ENCODE measurements at regions of chr5 and their contacts with region 1.

Region 1: DNA sequence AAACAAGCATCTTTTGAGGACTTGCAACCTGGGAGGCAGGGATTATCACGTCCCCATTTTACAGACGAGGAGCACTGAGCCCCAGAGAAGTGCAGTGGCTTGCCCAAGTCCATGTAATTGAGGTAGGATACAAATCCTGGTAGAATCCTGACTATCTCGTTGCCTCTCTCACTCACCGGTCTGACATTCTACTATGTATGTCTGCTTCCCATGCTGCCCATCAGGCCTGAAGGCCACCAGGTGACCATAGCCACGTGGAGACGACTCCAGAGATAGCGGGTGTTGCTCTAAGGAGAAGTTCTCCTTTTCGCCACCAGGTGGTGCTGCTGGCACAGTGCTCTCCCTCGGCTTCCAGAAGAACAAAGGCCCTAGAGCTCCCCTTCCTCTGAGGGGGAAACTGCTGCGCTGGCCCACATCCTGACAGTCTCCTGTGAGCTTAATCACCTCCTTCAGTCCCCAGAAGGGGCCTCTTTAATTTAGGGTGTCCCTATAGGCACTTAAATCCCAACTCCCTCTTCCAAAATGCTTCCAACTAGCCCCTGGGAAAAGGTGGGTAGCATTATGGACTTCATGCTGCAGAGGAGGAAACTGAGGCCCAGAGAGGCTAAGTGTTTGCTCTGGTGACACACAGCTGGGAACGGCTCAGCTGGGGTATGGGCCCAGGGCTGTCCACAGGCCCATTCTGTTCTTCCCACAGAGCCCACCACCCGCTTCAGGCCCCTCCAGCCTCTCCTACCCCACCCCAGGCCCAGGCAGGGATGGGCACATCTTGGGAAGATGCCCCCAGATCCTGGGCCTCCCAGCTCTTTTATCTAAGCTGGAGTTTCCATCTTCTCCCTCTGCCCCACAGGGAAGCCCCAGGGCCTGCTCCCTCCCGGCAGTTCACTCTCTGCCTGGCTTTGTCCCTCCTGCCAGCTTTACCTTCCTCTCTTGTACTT is 6.4 kb downstream of the SLC34A1 start:
- DNase-seq: peak; percentile 76 to 91 (median 88)
- ATAC-seq: peak; percentile 89
- H3K4me3 ChIP-seq: no peak overlapping the region
- H3K4me3 Mint-ChIP-seq: peak overlapping the region in 9 of 10 donors; percentile 29 to 68 (median 53)
- H3K27ac ChIP-seq: peak overlapping the region; percentile 63
- H3K27ac Mint-ChIP-seq: peak overlapping the region in 8 of 9 donors; percentile 65 to 86 (median 78)
- H3K4me1 ChIP-seq: peaks cover 31 to 33% of the 10 kb centered on the region in 2 donors
- H3K4me1 Mint-ChIP-seq: peaks cover 30 to 39% (median 34%) of the 10 kb centered on the region in 7 donors
- H3K27me3 ChIP-seq: no peaks in the 10 kb centered on the region
- H3K27me3 Mint-ChIP-seq: peaks cover 0 to 6% (median 0%) of the 10 kb centered on the region in 5 donors

Region 2: DNA sequence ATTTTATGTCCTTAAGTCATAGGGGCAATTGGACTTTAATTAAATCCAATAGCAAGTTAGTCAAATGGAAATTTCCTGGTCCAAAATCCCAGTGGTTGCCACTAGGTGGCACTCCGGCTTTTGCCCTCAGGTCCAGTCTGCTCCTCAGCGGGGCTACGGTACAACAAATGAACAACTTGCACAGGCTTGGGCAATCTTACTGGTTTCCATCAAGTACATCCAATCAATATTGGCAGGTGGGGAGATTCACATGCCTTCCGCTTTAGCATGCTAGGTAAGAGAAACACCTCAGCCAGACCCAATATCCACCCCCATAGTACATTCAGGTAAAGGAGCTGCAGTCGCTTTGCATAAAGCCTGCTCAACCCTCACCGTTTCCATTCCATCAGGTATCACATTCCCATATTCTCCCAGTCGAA is 72.7 kb before region 1 on chr5:
- CTCF ChIA-PET with region 1: interaction called, 7 read pairs
- POLR2A ChIA-PET with region 1: no interaction called
- intact Hi-C with region 1: loop called in 1 of 2 experiments (anchors 2 kb)
- DNase-seq: peak; percentile 41 to 73 (median 69)
- ATAC-seq: peak; percentile 84
- H3K4me3 ChIP-seq: no peak overlapping the region
- H3K4me3 Mint-ChIP-seq: no peak overlapping the region
- H3K27ac ChIP-seq: no peak overlapping the region
- H3K27ac Mint-ChIP-seq: peak overlapping the region in 2 of 9 donors; percentile 32 to 37
- H3K4me1 ChIP-seq: peaks cover 1% of the 10 kb centered on the region in 2 donors
- H3K4me1 Mint-ChIP-seq: peaks cover 0 to 49% (median 20%) of the 10 kb centered on the region in 7 donors
- H3K27me3 ChIP-seq: no peaks in the 10 kb centered on the region
- H3K27me3 Mint-ChIP-seq: no peaks in the 10 kb centered on the region

Region 3: GRCh38 chr5:177370488-177371119 is 20.0 kb before region 1 on chr5:
- CTCF ChIA-PET with region 1: interaction called, 58 read pairs
- POLR2A ChIA-PET with region 1: interaction called, 52 read pairs
- intact Hi-C with region 1: loop called (anchors 1 to 2 kb)
- DNase-seq: peak in 7 of 9 donors; percentile 36 to 74 (median 65)
- ATAC-seq: peak; percentile 90
- H3K4me3 ChIP-seq: no peak overlapping the region
- H3K4me3 Mint-ChIP-seq: peak overlapping the region in 7 of 10 donors; percentile 20 to 79 (median 64)
- H3K27ac ChIP-seq: peak overlapping the region; percentile 76
- H3K27ac Mint-ChIP-seq: peak overlapping the region in 7 of 9 donors; percentile 33 to 94 (median 86)
- H3K4me1 ChIP-seq: peaks cover 36 to 73% of the 10 kb centered on the region in 2 donors
- H3K4me1 Mint-ChIP-seq: peaks cover 51 to 80% (median 70%) of the 10 kb centered on the region in 7 donors
- H3K27me3 ChIP-seq: no peaks in the 10 kb centered on the region
- H3K27me3 Mint-ChIP-seq: no peaks in the 10 kb centered on the region

Region 4: DNA sequence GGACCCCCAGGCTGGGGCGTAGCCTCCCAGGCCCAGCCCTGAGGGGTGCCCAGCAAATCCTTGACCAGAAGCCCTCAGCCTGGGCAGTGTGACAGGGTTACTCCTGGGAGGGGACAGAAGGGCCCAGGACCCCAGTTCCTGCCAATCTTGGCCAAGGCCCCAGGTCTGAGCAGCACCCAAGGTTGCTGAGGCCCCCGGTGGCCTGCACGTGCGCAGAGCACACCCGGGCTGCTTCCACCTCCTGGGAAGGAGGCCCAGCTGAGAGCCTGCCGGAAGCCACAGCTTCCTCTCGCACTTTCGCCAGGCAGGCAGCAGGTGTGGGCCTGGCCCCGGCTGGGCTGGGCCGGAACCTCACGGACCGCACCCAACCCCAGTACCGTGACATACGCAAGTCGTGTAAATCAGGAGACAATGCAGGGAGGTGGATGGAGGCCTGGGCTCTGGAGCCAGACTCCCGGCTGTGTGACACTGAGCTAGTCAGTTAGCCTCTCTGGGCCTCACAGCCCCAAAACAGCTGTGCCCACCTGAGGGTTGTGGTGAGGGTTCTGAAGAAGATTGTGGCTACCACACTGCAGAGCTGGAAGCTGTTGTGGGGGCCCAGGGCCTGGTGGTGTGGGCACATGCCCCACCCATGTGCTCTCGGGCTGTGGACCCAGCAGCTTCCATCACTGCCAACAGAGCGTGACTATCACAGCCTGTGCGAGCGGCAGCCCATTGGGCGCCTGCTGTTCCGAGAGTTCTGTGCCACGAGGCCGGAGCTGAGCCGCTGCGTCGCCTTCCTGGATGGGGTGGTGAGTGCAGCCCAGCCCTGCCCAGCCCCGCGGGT is 40.9 kb after region 1 on chr5:
- CTCF ChIA-PET with region 1: interaction called, 5 read pairs
- POLR2A ChIA-PET with region 1: interaction called, 19 read pairs
- intact Hi-C with region 1: loop called (anchors 1 kb)
- DNase-seq: peak; percentile 46 to 77 (median 73)
- ATAC-seq: peak; percentile 36
- H3K4me3 ChIP-seq: peak overlapping the region; percentile 95
- H3K4me3 Mint-ChIP-seq: peak overlapping the region; percentile 87 to 96 (median 94)
- H3K27ac ChIP-seq: peak overlapping the region; percentile 92
- H3K27ac Mint-ChIP-seq: peak overlapping the region; percentile 91 to 97 (median 94)
- H3K4me1 ChIP-seq: peaks cover 67 to 70% of the 10 kb centered on the region in 2 donors
- H3K4me1 Mint-ChIP-seq: peaks cover 37 to 87% (median 66%) of the 10 kb centered on the region in 7 donors
- H3K27me3 ChIP-seq: no peaks in the 10 kb centered on the region
- H3K27me3 Mint-ChIP-seq: no peaks in the 10 kb centered on the region

Region 5: DNA sequence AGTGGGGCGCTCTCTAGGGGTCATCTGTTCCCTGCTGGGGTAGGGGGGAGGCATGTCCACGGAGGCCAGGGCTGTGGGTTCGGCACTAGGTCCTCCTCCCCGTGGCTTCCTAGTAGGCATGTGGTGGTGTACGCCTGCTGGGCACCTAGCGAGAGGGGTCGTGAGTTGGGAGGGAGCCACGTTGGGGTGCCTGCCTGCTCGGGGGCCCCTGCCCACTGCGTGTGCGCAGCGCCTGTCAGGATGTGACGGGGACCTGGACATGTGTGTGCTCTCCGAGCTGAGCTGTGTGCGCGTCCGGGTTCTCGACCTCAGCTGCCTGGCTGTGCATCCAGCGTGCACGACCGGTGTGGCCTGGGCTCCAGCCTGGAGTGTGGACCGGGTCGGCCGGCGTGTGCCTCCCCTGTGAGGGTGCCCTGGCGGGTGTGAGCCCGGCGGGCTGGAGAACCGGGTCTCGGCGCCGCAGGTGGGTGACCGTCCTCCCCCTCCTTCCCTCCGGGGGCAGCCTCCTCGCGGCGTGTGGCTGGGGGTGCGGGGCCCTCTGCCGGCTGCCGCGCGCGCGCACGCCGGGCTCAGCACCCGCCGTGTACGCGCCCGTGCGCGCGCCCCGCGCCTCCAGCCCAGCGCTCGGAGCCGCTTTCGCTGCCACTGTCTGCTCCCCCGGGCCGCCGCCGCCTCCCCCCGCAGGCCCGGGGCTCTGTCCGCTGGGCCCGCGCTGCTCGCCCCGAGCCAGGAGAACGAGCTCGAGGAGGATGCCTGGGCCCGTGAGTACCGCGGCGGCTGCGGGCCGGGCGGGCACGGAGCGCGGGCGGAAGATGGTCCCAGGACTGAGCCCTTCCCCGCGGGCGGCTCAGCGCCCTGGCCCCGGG is 55.8 kb after region 1 on chr5 and contains the start of gene PRR7:
- CTCF ChIA-PET with region 1: interaction called, 20 read pairs
- POLR2A ChIA-PET with region 1: interaction called, 7 read pairs
- intact Hi-C with region 1: no loop called
- DNase-seq: peak; percentile 71 to 85 (median 81)
- ATAC-seq: peak; percentile 75
- H3K4me3 ChIP-seq: peak within 1 kb of the TSS; percentile 64
- H3K4me3 Mint-ChIP-seq: peak within 1 kb of the TSS; percentile 77 to 85 (median 82)
- H3K27ac ChIP-seq: peak within 1 kb of the TSS; percentile 97
- H3K27ac Mint-ChIP-seq: peak within 1 kb of the TSS; percentile 86 to 97 (median 92)
- H3K4me1 ChIP-seq: peaks cover 7 to 34% of the 10 kb centered on the region in 2 donors
- H3K4me1 Mint-ChIP-seq: peaks cover 31 to 52% (median 41%) of the 10 kb centered on the region in 7 donors
- H3K27me3 ChIP-seq: no peaks in the 10 kb centered on the region
- H3K27me3 Mint-ChIP-seq: peaks cover 0 to 10% (median 0%) of the 10 kb centered on the region in 5 donors
- total RNA-seq, gene PRR7: 6.4 to 31.8 (median 6.8) TPM

Region 6: DNA sequence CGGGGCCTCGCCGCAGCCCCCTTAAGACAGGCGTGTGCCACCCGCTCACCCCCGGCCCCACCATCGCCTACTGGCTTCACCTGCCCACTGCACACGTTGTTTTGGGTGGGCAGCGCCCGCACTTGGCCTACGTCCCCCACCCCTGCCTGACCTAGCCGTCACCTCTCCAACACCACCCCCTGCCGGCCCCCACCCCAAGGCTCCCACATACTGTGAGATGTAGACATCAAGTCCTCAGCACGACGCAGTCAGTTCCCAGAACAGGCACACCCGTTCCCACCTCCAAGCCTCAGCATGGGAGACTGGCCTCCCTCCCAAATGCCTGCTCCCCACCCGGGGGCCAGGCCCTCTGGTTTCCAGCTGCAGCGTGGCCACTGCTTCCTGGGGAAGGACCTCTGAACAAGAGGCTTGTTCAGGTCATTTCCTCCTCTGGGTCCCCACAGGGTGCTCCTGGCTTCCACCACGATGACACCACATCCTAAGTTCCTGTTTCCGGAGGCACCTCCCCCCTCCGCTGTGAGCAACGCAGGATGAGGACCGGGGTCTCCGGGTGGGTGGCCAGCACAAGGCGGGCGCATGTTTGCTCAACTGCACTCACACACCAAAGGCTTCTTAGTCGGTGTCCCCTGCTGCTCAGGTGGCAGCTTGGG is 71.5 kb after region 1 on chr5:
- CTCF ChIA-PET with region 1: interaction called, 149 read pairs
- POLR2A ChIA-PET with region 1: interaction called, 8 read pairs
- intact Hi-C with region 1: no loop called
- DNase-seq: no peak
- ATAC-seq: peak; percentile 40
- H3K4me3 ChIP-seq: no peak overlapping the region
- H3K4me3 Mint-ChIP-seq: peak overlapping the region in 1 of 10 donors; percentile 70
- H3K27ac ChIP-seq: no peak overlapping the region
- H3K27ac Mint-ChIP-seq: peak overlapping the region in 2 of 9 donors; percentile 59 to 69
- H3K4me1 ChIP-seq: no peaks in the 10 kb centered on the region
- H3K4me1 Mint-ChIP-seq: peaks cover 0 to 25% (median 8%) of the 10 kb centered on the region in 7 donors
- H3K27me3 ChIP-seq: no peaks in the 10 kb centered on the region
- H3K27me3 Mint-ChIP-seq: no peaks in the 10 kb centered on the region

Region 7: GRCh38 chr5:178383919-178384815 is 993.5 kb after region 1 on chr5:
- CTCF ChIA-PET with region 1: no interaction called
- POLR2A ChIA-PET with region 1: no interaction called
- intact Hi-C with region 1: no loop called
- DNase-seq: no peak
- ATAC-seq: no peak
- H3K4me3 ChIP-seq: no peak overlapping the region
- H3K4me3 Mint-ChIP-seq: no peak overlapping the region
- H3K27ac ChIP-seq: no peak overlapping the region
- H3K27ac Mint-ChIP-seq: no peak overlapping the region
- H3K4me1 ChIP-seq: no peaks in the 10 kb centered on the region
- H3K4me1 Mint-ChIP-seq: no peaks in the 10 kb centered on the region
- H3K27me3 ChIP-seq: no peaks in the 10 kb centered on the region
- H3K27me3 Mint-ChIP-seq: peaks cover 0 to 20% (median 10%) of the 10 kb centered on the region in 5 donors